ENCODE measurements at regions of chr12 and their contacts with region 1.

Region 1: DNA sequence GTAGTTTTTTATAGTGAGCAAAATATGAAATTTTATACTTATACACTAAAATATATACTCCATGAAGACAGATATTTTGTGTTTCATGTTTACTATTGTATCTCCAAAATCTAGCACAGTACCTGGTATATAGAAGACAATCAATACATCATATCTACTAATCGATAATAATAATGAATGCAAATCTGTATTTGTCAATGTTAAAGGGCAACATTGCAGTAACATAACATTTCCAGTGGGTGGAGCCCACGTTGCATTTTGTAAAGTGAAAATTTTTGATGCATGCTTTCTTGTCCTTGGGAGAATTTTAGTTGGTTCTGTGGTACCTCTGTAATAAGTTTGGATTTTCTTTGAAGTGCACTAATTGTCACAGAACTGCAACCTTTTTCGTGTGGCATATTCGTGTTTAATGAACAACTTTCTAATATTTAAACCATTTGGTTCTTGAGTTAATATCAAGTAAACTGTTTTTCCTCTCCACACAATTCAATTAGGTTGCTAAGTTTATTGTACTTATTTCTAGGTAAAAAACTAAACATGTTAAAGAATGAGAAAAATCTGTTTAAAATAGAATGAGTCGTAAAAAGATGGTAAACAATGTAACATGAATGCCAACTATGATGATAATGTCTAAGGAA is 47.4 kb downstream of the AVPR1A start:
- DNase-seq: no peak
- ATAC-seq: no peak
- H3K4me3 ChIP-seq: no peak overlapping the region
- H3K27ac ChIP-seq: no peak overlapping the region
- H3K4me1 ChIP-seq: no peaks in the 10 kb centered on the region
- H3K27me3 ChIP-seq: no peaks in the 10 kb centered on the region
- CTCF ChIP-seq: peak; percentile 55 to 91 (median 85)

Region 2: GRCh38 chr12:63276537-63277365 is 173.1 kb after region 1 on chr12:
- intact Hi-C with region 1: loop called in 2 of 10 experiments (anchors 10 kb)
- DNase-seq: no peak
- ATAC-seq: no peak
- H3K4me3 ChIP-seq: no peak overlapping the region
- H3K27ac ChIP-seq: no peak overlapping the region
- H3K4me1 ChIP-seq: no peaks in the 10 kb centered on the region
- H3K27me3 ChIP-seq: no peaks in the 10 kb centered on the region
- CTCF ChIP-seq: peak in 7 of 9 donors; percentile 46 to 65 (median 55)

Region 3: DNA sequence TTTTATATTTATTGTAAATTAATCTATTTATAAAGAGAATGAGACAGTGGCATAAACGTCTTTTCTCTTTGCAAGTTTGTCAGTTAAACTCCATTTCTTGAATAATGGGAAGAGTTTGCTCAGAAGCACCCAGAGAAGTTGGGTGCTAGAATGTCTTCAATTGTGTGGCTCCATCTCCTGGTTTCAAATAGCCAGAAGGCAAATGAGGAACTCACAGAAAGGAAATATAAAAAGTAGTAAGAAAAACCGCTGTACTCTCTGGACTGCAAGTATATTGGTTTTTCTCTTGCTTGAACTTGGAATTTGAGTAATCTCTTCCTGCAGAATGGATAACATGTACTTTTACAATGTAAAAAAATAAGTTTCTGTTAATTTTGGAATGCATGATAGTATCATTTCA is 347.2 kb after region 1 on chr12:
- intact Hi-C with region 1: loop called in 2 of 10 experiments (anchors 5 to 10 kb)
- DNase-seq: no peak
- ATAC-seq: no peak
- H3K4me3 ChIP-seq: no peak overlapping the region
- H3K27ac ChIP-seq: no peak overlapping the region
- H3K4me1 ChIP-seq: no peaks in the 10 kb centered on the region
- H3K27me3 ChIP-seq: no peaks in the 10 kb centered on the region
- CTCF ChIP-seq: peak in 4 of 9 donors; percentile 20 to 49 (median 34)

Region 4: GRCh38 chr12:63792338-63792737 is 688.7 kb after region 1 on chr12:
- intact Hi-C with region 1: loop called in 1 of 10 experiments (anchors 5 kb)
- DNase-seq: no peak
- ATAC-seq: no peak
- H3K4me3 ChIP-seq: no peak overlapping the region
- H3K27ac ChIP-seq: no peak overlapping the region
- H3K4me1 ChIP-seq: no peaks in the 10 kb centered on the region
- H3K27me3 ChIP-seq: no peaks in the 10 kb centered on the region
- CTCF ChIP-seq: no peak

Region 5: GRCh38 chr12:64256166-64256800 is 1152.7 kb after region 1 on chr12:
- intact Hi-C with region 1: loop called in 2 of 10 experiments (anchors 10 kb)
- DNase-seq: peak in 1 of 2 donors; percentile 29
- ATAC-seq: peak in 4 of 8 donors; percentile 25 to 52 (median 36)
- H3K4me3 ChIP-seq: peak overlapping the region in 3 of 10 donors; percentile 0 to 15 (median 11)
- H3K27ac ChIP-seq: no peak overlapping the region
- H3K4me1 ChIP-seq: peaks cover 0 to 12% (median 0%) of the 10 kb centered on the region in 9 donors
- H3K27me3 ChIP-seq: no peaks in the 10 kb centered on the region
- CTCF ChIP-seq: peak; percentile 54 to 83 (median 78)